ENCODE measurements at regions of chr14 and their contacts with region 1.

Region 1: DNA sequence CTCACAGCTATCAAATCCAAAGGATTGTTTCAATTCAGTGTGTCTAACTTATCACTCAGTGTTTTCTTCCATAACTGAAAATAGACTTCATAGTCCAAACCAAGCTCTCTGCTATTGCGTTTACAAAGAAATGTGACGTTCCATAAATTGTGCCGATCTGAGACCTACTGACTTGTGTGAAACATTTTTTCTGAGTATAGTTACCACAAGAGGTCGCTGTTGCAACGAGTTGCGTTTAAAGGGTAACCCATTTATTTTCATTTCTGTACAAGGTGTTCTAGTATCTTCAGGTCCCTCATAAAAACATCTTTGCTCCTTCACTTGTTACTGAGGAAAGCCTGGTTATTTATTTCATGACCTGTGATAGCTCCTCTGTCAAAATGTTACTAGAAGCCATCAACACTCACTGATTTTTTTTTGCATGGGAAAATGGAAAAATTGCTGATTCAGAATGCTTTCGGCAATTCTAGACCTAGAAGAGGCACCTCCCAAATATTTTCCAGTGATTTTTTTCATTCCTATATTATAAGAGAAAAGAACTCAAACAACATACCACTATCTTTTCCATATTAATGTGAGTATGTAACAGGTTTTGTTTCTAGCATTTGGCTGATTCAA is 60.9 kb upstream of the OR4E1 start:
- DNase-seq: no peak
- H3K4me3 ChIP-seq: no peak overlapping the region
- H3K27ac ChIP-seq: no peak overlapping the region
- H3K4me1 ChIP-seq: peaks cover 0 to 2% (median 0%) of the 10 kb centered on the region in 4 experiments; a peak in 1 of 7 replicates
- H3K27me3 ChIP-seq: no peaks in the 10 kb centered on the region; a peak in 1 of 7 replicates
- CTCF ChIP-seq: peak in 2 of 3 experiments; percentile 57 to 74; a peak in 2 of 4 replicates
- EP300 ChIP-seq: no peak
- POLR2A ChIP-seq: no peak
- RAD21 ChIP-seq: peak; percentile 40 to 53; a peak in 3 of 4 replicates

Region 2: GRCh38 chr14:21723431-21724045 is 11.0 kb before region 1 on chr14:
- CTCF ChIA-PET with region 1: interaction called, 22 read pairs
- POLR2A ChIA-PET with region 1: no interaction called
- DNase-seq: peak; percentile 47 to 79
- H3K4me3 ChIP-seq: no peak overlapping the region
- H3K27ac ChIP-seq: no peak overlapping the region
- H3K4me1 ChIP-seq: no peaks in the 10 kb centered on the region
- H3K27me3 ChIP-seq: no peaks in the 10 kb centered on the region
- CTCF ChIP-seq: peak; percentile 85 to 99 (median 96)
- EP300 ChIP-seq: no peak
- POLR2A ChIP-seq: no peak
- RAD21 ChIP-seq: peak; percentile 69 to 79